Activated B cell treated with CpG ODN at 0.5 μM for 24 hours (primary cell): ENCODE measurements at regions of chr11 and their contacts with region 1.

Region 1: DNA sequence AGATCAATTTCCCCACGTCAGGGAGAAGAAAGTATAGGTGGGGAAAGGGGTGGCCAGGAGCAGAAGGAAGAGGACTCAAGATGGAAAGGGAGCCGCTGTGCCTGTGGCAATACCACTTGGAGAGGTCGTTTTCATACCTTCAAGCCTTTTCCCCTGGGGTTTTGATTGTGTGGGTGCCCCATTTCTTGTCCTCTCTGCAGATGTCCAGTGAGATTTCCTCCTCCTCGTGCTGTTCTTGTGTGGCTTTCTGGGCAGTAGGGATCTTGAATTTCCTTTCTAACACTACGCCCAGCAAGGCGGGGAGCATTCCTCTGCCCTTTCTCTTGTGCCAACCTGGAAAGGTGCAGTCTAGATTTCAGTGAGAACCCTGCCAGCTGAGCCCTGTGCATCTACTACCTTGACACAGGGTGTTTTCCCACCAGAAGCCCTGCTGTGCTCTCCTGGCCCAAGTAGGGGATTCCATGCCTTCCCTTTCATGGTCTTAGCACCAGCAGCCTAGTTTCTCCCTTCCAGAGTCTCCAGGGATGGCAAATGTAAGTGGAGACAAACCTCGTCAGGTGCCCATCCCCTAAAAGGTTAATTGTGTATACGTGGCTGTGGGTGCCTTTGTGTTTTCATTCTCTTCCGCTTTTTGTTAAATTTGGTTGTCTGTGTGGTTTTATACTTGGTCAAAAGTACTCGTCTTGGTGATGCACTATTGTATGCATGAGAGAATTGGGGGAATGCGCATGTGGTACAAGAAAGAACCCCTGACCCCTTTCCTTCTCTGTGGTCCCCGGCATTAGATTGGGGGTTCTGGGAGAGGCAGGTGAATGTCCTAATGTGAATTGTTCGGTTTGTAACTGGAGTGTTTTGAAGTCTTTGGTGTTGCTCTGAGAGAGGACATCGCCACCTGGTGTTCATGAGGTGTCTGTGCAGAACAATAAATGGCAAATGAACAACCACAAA is 71.4 kb upstream of the MPEG1 start:
- DNase-seq: peak; percentile 55
- ATAC-seq: peak; percentile 73
- H3K4me3 Mint-ChIP-seq: peak overlapping the region; percentile 70
- H3K27ac Mint-ChIP-seq: peak overlapping the region; percentile 87
- H3K4me1 Mint-ChIP-seq: peaks cover 57% of the 10 kb centered on the region
- H3K27me3 Mint-ChIP-seq: no peaks in the 10 kb centered on the region
- CTCF ChIP-seq: peak; percentile 59

Region 2: GRCh38 chr11:58524232-58525036 is 759.7 kb before region 1 on chr11:
- CTCF ChIA-PET with region 1: no interaction called
- POLR2A ChIA-PET with region 1: no interaction called
- intact Hi-C with region 1: loop called (anchors 10 kb)
- DNase-seq: no peak
- ATAC-seq: peak; percentile 18
- H3K4me3 Mint-ChIP-seq: peak overlapping the region; percentile 64
- H3K27ac Mint-ChIP-seq: peak overlapping the region; percentile 87
- H3K4me1 Mint-ChIP-seq: peaks cover 43% of the 10 kb centered on the region
- H3K27me3 Mint-ChIP-seq: no peaks in the 10 kb centered on the region
- CTCF ChIP-seq: no peak

Region 3: DNA sequence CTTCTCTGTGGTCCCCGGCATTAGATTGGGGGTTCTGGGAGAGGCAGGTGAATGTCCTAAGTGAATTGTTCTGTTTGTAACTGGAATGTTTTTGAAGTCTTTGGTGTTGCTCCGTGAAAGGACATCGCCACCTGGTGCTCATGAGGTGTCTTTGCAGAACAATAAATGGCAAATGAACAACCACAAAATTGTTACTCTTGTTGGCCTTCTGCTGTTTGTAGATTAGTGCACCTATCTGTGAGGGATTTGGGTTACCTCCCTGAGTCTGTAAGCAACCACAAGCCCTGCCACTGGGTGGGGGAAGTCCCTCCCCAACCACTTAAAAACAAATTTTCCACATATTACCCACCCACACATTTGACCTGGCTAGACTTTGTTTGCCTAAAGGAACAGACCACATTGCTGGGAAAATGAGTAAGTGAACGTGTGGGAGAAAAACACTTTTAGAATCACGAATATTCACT is 76.1 kb before region 1 on chr11:
- CTCF ChIA-PET with region 1: interaction called, 5 read pairs
- POLR2A ChIA-PET with region 1: interaction called, 6 read pairs
- intact Hi-C with region 1: loop called (anchors 1 kb)
- DNase-seq: no peak
- ATAC-seq: peak; percentile 45
- H3K4me3 Mint-ChIP-seq: peak overlapping the region; percentile 98
- H3K27ac Mint-ChIP-seq: peak overlapping the region; percentile 93
- H3K4me1 Mint-ChIP-seq: peaks cover 93% of the 10 kb centered on the region
- H3K27me3 Mint-ChIP-seq: no peaks in the 10 kb centered on the region
- CTCF ChIP-seq: no peak

Region 4: DNA sequence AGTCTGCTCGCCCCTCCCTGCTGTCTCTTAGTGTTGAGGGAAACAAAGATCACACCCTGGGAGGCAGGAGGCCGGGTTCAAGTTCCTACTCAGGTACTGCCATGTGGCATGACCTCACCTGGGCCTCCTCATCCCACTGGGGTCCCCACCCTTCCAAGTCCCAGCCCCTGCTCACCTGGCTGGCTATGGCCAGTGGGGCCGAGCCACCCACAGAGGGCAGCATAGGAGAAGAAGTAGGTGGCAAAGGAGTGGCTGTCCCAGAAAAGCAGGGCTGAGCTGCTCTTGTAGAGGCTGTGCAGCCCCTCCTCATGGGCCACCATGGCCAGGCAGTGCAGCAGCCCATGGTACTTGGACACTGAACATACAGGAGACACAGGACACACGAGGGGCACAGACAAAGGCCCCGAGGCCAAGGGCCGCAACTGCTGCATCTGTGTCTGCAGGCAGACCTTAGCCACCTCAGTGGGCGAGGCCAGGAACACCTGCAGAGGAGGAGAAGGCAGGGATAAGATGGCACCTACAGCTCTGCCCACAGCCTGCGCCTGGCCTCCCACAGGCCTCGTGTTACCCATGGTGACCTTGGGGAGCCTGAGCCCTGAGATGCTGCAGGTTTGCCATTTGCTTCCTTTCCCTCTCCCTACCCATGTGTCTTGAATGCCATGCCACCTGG is 20.7 kb before region 1 on chr11:
- CTCF ChIA-PET with region 1: interaction called, 11 read pairs
- POLR2A ChIA-PET with region 1: interaction called, 3 read pairs
- intact Hi-C with region 1: loop called (anchors 1 kb)
- DNase-seq: peak; percentile 52
- ATAC-seq: peak; percentile 65
- H3K4me3 Mint-ChIP-seq: no peak overlapping the region
- H3K27ac Mint-ChIP-seq: no peak overlapping the region
- H3K4me1 Mint-ChIP-seq: peaks cover 71% of the 10 kb centered on the region
- H3K27me3 Mint-ChIP-seq: no peaks in the 10 kb centered on the region
- CTCF ChIP-seq: no peak

Region 5: GRCh38 chr11:59429924-59430516 is 145.9 kb after region 1 on chr11:
- CTCF ChIA-PET with region 1: no interaction called
- POLR2A ChIA-PET with region 1: no interaction called
- intact Hi-C with region 1: loop called (anchors 1 kb)
- DNase-seq: no peak
- ATAC-seq: peak; percentile 87
- H3K4me3 Mint-ChIP-seq: no peak overlapping the region
- H3K27ac Mint-ChIP-seq: no peak overlapping the region
- H3K4me1 Mint-ChIP-seq: no peaks in the 10 kb centered on the region
- H3K27me3 Mint-ChIP-seq: peaks cover 9% of the 10 kb centered on the region
- CTCF ChIP-seq: peak; percentile 50